Breast epithelium (tissue), 4 donors: ENCODE measurements at regions of chr3 and their contacts with region 1.

Region 1: GRCh38 chr3:132399054-132399929 is 18.0 kb upstream of the DNAJC13 start:
- DNase-seq: no peak
- H3K4me3 ChIP-seq: no peak overlapping the region
- H3K27ac ChIP-seq: no peak overlapping the region
- H3K4me1 ChIP-seq: no peaks in the 10 kb centered on the region
- H3K27me3 ChIP-seq: no peaks in the 10 kb centered on the region
- CTCF ChIP-seq: peak in 2 of 3 donors; percentile 35 to 52
- POLR2A ChIP-seq: no peak

Region 2: DNA sequence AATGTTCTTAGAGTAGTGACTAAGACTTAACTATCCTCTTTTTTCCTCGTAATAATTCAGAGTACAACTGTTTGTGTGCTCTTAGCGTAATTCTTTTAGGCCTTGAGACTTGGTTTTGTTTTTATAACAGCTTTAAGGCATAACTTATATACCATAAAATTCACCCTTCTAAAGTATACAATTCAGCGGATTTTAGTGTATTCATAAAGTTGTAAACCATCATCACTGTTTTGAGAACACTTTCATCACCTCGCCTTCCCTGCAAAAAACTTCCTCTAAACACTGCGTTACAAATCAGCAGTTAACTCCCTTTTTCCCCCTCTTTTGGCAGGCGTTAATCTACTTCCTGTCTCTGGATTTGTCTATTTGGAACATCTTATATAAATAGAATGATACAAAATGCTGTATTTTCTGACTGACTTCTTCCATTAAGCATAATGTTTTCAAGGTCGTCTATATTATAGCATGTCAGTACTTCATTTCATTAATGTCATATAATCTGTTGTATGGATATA is 36.7 kb after region 1 on chr3:
- intact Hi-C with region 1: loop called (anchors 2 kb)
- DNase-seq: no peak
- H3K4me3 ChIP-seq: no peak overlapping the region
- H3K27ac ChIP-seq: no peak overlapping the region
- H3K4me1 ChIP-seq: no peaks in the 10 kb centered on the region
- H3K27me3 ChIP-seq: no peaks in the 10 kb centered on the region
- CTCF ChIP-seq: no peak
- POLR2A ChIP-seq: no peak